ENCODE measurements at regions of chr1 and their contacts with region 1.

Region 1: DNA sequence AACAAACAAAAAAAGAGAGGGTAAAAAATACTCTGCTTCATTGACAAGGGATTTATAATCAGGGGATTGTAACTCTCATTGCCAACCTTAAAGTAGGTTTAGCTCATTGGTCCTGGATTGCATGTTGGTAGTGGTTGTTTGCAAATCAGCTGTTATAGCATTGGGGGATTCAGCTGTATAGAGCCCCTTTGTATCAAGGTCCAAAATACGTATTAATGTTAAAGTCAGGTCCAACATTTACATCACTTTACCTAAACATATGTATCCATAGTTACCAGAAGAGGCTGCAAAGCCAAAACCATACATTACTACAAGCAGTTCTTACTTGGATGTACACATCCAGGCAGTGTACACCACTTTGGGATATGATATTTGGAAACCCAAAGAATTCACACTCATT is 29.4 kb downstream of the RPS27 start:
- DNase-seq: no peak
- H3K4me3 ChIP-seq: no peak overlapping the region
- CTCF ChIP-seq: no peak

Region 2: DNA sequence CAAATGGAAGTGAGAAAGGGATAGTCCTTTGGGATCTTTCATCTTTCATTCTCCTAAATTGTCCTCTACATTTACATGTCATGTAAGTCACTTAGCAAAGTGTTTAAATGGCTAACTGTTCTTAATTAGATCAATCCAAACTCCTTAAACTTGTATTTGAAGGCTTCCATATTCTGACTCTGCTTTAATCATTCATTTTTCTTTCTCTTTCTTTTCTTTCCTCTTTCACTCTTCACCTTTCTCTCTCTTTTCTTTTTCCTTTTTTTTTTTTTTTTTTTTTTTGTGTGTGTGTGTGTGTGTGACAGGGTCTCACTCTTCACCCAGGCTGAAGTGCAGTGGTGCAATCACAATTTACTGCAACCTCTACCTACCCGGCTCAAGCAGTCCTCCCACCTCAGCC is 42.4 kb after region 1 on chr1:
- in situ Hi-C with region 1: loop called (anchors 5 kb)
- DNase-seq: no peak
- H3K4me3 ChIP-seq: no peak overlapping the region
- CTCF ChIP-seq: no peak

Measured in astrocyte of the cerebellum (primary cell).